ENCODE measurements at regions of chr18 and their contacts with region 1.

Region 1: DNA sequence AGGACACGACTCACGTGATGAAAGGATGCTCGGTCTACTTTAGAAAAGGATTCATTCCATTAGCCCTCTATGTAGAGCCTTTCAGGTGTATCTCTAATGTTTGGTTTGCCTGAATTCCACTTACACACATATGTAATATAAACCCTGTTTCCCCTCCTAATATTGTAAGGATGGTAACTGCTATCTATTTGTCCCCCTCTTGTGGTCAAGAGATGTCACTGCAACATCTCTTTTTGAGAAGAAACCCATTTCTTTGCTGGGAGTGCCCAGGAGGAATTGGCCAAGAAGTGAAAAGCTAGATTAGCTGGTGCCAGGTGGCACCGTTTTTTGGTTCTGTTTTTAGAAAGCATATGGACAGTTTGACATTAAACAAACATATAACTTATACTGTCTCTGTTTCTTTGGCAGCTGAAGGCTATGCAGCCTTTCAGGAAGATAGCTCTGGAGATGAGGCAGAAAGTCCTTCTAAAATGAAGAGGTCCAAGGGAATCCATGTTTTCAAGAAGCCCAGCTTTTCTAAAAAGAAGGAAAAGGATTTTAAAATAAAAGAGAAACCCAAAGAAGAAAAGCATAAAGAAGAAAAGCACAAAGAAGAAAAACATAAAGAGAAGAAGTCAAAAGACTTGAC is 41.2 kb downstream of the RALBP1 start:
- DNase-seq: no peak
- H3K4me3 ChIP-seq: no peak overlapping the region
- H3K27ac ChIP-seq: no peak overlapping the region
- H3K4me1 ChIP-seq: no peaks in the 10 kb centered on the region
- H3K27me3 ChIP-seq: no peaks in the 10 kb centered on the region
- CTCF ChIP-seq: peak; percentile 89

Region 2: DNA sequence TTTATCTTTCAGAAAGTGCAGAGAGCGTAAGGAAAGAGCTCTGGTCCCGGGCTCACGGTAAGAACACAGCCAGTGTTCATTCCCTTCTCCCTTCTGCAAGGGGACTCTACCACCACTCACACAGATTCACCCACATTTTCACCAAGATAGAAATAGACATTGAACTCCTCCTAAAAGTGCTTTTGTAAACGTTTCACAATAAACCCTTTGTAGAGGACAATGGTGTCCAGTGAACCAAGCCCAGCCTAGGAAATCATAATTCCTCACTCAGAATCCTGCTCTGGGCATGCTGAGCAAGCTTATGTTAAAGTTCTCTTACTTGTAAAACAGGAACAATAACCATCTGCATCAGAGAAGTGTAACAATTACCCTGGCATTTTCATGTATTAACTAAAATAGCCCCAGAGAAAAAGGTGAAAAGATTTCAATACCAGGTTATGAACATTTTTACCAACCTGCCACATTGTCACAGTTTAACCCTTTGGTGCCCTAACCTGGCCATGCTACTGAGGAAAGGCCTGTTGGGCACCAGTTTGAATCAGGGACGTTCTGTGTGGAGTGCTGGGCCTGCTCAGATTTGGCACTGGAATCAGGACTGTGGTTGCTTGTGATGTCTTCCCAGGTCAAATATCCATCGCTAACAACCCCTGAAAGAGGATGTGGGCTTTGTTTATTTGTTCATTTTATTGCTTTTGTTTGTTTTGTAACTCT is 436.6 kb before region 1 on chr18:
- intact Hi-C with region 1: loop called (anchors 10 kb)
- DNase-seq: no peak
- H3K4me3 ChIP-seq: no peak overlapping the region
- H3K27ac ChIP-seq: no peak overlapping the region
- H3K4me1 ChIP-seq: no peaks in the 10 kb centered on the region
- H3K27me3 ChIP-seq: no peaks in the 10 kb centered on the region
- CTCF ChIP-seq: no peak

Region 3: GRCh38 chr18:9334329-9334972 is 182.1 kb before region 1 on chr18 and contains the start of gene TWSG1:
- intact Hi-C with region 1: loop called (anchors 10 kb)
- DNase-seq: peak; percentile 94
- H3K4me3 ChIP-seq: peak within 1 kb of the TSS; percentile 82
- H3K27ac ChIP-seq: peak within 1 kb of the TSS; percentile 80
- H3K4me1 ChIP-seq: peaks cover 3% of the 10 kb centered on the region
- H3K27me3 ChIP-seq: no peaks in the 10 kb centered on the region
- CTCF ChIP-seq: peak; percentile 11
- total RNA-seq, gene TWSG1: 14.1 to 25.1 TPM

Region 4: GRCh38 chr18:9392726-9393125 is 123.8 kb before region 1 on chr18:
- intact Hi-C with region 1: loop called (anchors 10 kb)
- DNase-seq: no peak
- H3K4me3 ChIP-seq: no peak overlapping the region
- H3K27ac ChIP-seq: no peak overlapping the region
- H3K4me1 ChIP-seq: no peaks in the 10 kb centered on the region
- H3K27me3 ChIP-seq: no peaks in the 10 kb centered on the region
- CTCF ChIP-seq: no peak

Region 5: GRCh38 chr18:9506046-9506792 is 10.3 kb before region 1 on chr18:
- intact Hi-C with region 1: no loop called
- DNase-seq: peak; percentile 25
- H3K4me3 ChIP-seq: no peak overlapping the region
- H3K27ac ChIP-seq: no peak overlapping the region
- H3K4me1 ChIP-seq: no peaks in the 10 kb centered on the region
- H3K27me3 ChIP-seq: no peaks in the 10 kb centered on the region
- CTCF ChIP-seq: no peak

Measured in colonic mucosa (tissue), 4 donors.